Natural killer cell (primary cell): ENCODE measurements at regions of chr1 and their contacts with region 1.

Region 1: GRCh38 chr1:77759071-77760028 is at the start of gene USP33:
- DNase-seq: peak; percentile 95
- ATAC-seq: peak; percentile 87 to 97 (median 92)
- H3K4me3 ChIP-seq: peak within 1 kb of the TSS; percentile 93
- H3K4me3 Mint-ChIP-seq: peak within 1 kb of the TSS; percentile 94
- H3K27ac ChIP-seq: peak within 1 kb of the TSS; percentile 87
- H3K27ac Mint-ChIP-seq: peak within 1 kb of the TSS; percentile 97
- H3K4me1 ChIP-seq: peaks cover 8% of the 10 kb centered on the region
- H3K4me1 Mint-ChIP-seq: peaks cover 35 to 36% of the 10 kb centered on the region in 2 donors
- H3K27me3 ChIP-seq: no peaks in the 10 kb centered on the region
- H3K27me3 Mint-ChIP-seq: no peaks in the 10 kb centered on the region
- CTCF ChIP-seq: no peak
- total RNA-seq, gene USP33: 88.1 to 112 (median 101) TPM

Region 2: DNA sequence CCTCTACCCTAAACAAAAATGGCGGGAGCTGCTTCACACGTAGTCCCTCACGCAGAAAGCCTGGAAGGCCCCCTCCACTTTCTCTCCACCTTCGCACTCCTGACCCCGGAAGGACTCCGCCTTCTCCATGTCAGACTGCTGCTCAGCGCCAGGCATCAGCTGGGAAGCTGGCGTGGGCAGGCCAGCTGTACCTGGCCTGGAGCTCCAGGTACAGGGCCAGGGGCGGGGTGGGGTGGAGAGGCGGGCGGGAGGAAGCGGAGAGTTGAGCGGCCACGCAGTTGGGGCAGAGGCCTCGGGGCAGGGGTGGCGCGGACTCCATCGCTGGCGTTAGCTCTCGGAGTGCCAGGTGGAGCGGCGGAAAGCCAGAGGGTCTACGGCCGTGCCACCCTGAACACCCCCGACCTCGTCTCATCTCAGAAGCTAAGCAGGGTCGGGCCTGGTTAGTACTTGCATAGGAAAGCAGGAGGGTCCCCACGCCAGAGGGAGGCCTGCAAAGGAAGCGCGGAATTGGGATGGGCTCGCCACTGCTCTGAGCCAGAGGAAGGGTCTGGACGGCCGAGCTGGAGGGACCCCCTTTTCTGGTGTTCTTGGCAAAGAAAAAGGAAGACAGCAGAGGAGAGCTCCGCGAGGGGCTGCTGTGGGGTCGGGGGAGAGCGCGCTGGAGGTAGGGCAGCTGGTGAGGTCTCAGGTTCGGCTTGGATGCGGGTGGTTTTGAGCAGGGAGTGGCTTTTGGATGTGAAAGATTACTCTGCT is 20.4 kb after region 1 on chr1 and contains the start of gene MIGA1:
- intact Hi-C with region 1: loop called (anchors 1 kb)
- DNase-seq: peak; percentile 67 to 96
- ATAC-seq: peak; percentile 94 to 97 (median 96)
- H3K4me3 ChIP-seq: peak within 1 kb of the TSS; percentile 94
- H3K4me3 Mint-ChIP-seq: peak within 1 kb of the TSS; percentile 95
- H3K27ac ChIP-seq: peak within 1 kb of the TSS; percentile 72
- H3K27ac Mint-ChIP-seq: peak within 1 kb of the TSS; percentile 85 to 96
- H3K4me1 ChIP-seq: peaks cover 14% of the 10 kb centered on the region
- H3K4me1 Mint-ChIP-seq: peaks cover 27 to 32% of the 10 kb centered on the region in 2 donors
- H3K27me3 ChIP-seq: no peaks in the 10 kb centered on the region
- H3K27me3 Mint-ChIP-seq: no peaks in the 10 kb centered on the region
- CTCF ChIP-seq: no peak
- total RNA-seq, gene MIGA1: 13.6 to 16.9 (median 15.6) TPM

Region 3: GRCh38 chr1:77825131-77825709 is 65.9 kb after region 1 on chr1:
- intact Hi-C with region 1: no loop called
- DNase-seq: peak in 1 of 2 donors; percentile 33
- ATAC-seq: peak in 1 of 3 donors; percentile 30
- H3K4me3 ChIP-seq: no peak overlapping the region
- H3K4me3 Mint-ChIP-seq: no peak overlapping the region
- H3K27ac ChIP-seq: no peak overlapping the region
- H3K27ac Mint-ChIP-seq: peak overlapping the region in 1 of 2 donors; percentile 44
- H3K4me1 ChIP-seq: no peaks in the 10 kb centered on the region
- H3K4me1 Mint-ChIP-seq: peaks cover 0 to 4% of the 10 kb centered on the region in 2 donors
- H3K27me3 ChIP-seq: no peaks in the 10 kb centered on the region
- H3K27me3 Mint-ChIP-seq: no peaks in the 10 kb centered on the region
- CTCF ChIP-seq: no peak

Region 4: DNA sequence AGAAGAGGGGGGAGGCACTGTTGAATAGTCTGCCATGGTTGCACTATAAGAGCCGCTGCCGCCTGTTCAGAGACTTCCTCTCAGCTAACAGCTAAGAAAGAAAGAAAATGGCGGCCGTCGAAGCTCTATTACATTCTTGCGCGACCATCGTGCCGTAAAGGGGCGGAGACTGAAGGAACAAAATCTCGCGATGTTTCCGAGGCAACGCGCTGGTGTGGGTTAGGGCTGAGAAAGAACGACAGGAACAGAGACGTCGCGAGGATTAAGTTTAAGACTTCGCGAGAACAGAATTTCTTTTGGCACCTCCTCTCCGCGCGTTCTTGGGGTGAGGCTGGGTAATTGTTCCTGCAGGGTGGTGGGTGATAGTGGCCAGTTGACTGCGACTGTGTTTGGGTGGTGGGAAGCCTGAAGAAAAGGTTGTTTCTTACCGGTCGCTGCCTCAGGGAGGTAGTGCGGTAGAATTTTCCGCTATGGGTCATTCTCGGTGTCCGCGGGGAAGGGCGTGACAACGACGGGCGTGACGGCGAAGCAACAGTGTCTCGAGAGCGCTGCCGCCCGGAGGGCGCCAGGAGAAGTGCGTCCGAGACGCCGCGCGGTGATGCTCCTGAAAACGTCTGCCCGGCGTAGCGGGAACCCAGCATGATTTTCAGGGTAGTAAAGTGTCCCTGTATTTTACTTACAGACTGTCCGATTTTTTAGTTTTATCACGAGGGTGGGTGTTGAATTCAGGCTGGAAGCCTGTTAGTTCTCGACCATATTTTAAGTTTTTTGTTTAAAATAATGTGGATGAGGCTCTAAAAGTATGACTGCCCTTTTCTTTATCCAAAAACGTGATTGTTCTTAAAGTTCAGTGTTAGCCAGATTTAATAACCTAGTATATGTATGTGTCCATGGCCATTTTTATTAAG is 219.9 kb after region 1 on chr1 and contains the start of gene FUBP1:
- intact Hi-C with region 1: loop called (anchors 2 kb)
- DNase-seq: peak; percentile 90 to 100
- ATAC-seq: peak; percentile 76 to 89 (median 77)
- H3K4me3 ChIP-seq: peak within 1 kb of the TSS; percentile 87
- H3K4me3 Mint-ChIP-seq: no peak within 1 kb of the TSS
- H3K27ac ChIP-seq: peak within 1 kb of the TSS; percentile 93
- H3K27ac Mint-ChIP-seq: no peak within 1 kb of the TSS
- H3K4me1 ChIP-seq: peaks cover 18% of the 10 kb centered on the region
- H3K4me1 Mint-ChIP-seq: peaks cover 28 to 39% of the 10 kb centered on the region in 2 donors
- H3K27me3 ChIP-seq: no peaks in the 10 kb centered on the region
- H3K27me3 Mint-ChIP-seq: no peaks in the 10 kb centered on the region
- CTCF ChIP-seq: peak; percentile 65
- total RNA-seq, gene FUBP1: 247 to 285 (median 249) TPM